Naive thymus-derived CD8-positive, alpha-beta T cell (primary cell): ENCODE measurements at regions of chr2 and their contacts with region 1.

Region 1: GRCh38 chr2:7450188-7450832 is 533.1 kb downstream of the RNF144A start:
- DNase-seq: peak in 8 of 10 donors; percentile 46 to 90 (median 76)
- ATAC-seq: peak; percentile 81 to 91
- H3K4me3 Mint-ChIP-seq: peak overlapping the region; percentile 46 to 84 (median 78)
- H3K27ac Mint-ChIP-seq: peak overlapping the region; percentile 96 to 99 (median 98)
- H3K4me1 Mint-ChIP-seq: peaks cover 51 to 86% (median 78%) of the 10 kb centered on the region in 4 donors
- H3K27me3 Mint-ChIP-seq: no peaks in the 10 kb centered on the region

Region 2: DNA sequence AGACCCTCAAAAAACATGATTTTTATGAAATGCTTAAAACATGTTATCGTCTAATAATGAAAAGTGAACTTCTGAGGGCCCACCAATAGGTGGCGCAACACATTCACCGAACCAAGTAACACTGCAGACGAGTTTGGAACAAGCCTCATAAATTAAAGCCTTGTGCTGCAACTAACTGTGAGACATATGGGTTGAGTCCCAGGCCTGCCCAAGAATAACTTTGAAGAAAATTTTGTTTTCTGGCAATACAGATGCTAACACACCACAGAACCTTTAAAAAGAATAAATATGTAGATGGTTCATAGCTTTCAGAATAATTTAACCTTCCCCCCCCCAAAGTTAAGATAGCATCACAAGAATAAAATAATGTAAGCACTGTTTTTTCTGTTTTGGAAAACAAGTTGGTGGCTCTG is 247.2 kb before region 1 on chr2:
- POLR2A ChIA-PET with region 1: no interaction called
- DNase-seq: peak; percentile 33 to 81 (median 62)
- ATAC-seq: peak; percentile 58 to 74
- H3K4me3 Mint-ChIP-seq: no peak overlapping the region
- H3K27ac Mint-ChIP-seq: no peak overlapping the region
- H3K4me1 Mint-ChIP-seq: no peaks in the 10 kb centered on the region
- H3K27me3 Mint-ChIP-seq: no peaks in the 10 kb centered on the region

Region 3: DNA sequence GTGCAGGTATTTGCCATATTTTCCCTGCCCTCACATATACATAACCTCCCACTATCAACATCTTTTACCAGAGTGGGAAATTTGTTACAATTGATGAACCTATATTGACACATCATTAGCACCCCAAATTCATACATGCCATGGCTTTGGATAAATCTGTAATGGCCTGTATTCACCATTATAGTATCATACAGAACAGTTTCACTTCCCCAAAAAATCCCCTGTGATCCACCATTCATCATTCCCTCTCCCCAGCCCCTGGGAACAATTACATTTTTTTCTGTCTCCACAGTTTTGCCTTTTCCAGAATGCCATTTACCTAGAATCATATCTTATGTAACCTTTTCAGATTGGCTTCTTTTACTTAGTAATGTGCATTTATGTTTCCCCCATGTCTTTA is 38.6 kb before region 1 on chr2:
- POLR2A ChIA-PET with region 1: no interaction called
- DNase-seq: no peak
- ATAC-seq: no peak
- H3K4me3 Mint-ChIP-seq: no peak overlapping the region
- H3K27ac Mint-ChIP-seq: no peak overlapping the region
- H3K4me1 Mint-ChIP-seq: no peaks in the 10 kb centered on the region
- H3K27me3 Mint-ChIP-seq: peaks cover 0 to 8% (median 5%) of the 10 kb centered on the region in 5 donors

Region 4: DNA sequence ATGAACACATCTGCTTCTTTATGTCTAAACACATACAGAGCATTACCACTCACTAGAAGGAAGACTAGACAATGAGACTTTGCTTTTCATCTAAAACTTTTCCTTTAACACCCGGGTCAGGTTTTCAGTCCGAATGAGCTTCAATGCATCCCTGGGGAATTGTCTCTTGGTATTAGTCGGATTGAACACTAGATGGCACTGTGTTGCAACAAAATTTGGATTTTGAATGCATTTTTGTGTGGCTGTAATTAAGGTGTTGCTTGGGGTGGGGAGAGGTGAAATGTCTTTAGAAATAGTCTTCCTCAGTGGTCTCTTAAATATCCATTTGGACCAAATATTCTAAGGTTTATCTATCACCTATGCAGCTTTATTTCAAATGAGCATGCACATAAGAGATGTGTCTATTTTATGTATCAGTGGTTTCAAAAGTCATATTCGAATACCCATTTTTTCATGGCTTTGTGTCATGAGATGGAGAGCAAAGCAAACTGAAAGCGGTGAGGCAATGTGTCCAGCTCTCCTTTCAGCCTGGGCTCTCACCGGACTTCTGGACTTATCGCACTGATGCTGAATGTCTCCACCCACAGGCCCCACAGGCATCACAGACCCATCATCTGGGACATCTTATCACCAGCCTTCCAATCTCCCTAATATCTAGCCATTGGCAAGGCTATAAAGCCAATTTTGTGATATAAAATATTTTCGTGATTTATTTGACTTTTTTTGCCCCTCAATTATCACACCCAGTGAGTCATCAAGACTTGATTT is 22.8 kb before region 1 on chr2:
- POLR2A ChIA-PET with region 1: interaction called, 38 read pairs
- DNase-seq: peak in 6 of 10 donors; percentile 19 to 77 (median 62)
- ATAC-seq: peak; percentile 10 to 35
- H3K4me3 Mint-ChIP-seq: peak overlapping the region in 7 of 10 donors; percentile 2 to 48 (median 26)
- H3K27ac Mint-ChIP-seq: peak overlapping the region; percentile 47 to 99 (median 80)
- H3K4me1 Mint-ChIP-seq: peaks cover 34 to 46% (median 46%) of the 10 kb centered on the region in 4 donors
- H3K27me3 Mint-ChIP-seq: peaks cover 0 to 3% (median 0%) of the 10 kb centered on the region in 5 donors

Region 5: GRCh38 chr2:7467782-7468447 is 17.6 kb after region 1 on chr2:
- POLR2A ChIA-PET with region 1: interaction called, 12 read pairs
- DNase-seq: peak in 8 of 10 donors; percentile 35 to 85 (median 74)
- ATAC-seq: peak; percentile 94 to 98
- H3K4me3 Mint-ChIP-seq: peak overlapping the region in 9 of 10 donors; percentile 11 to 63 (median 47)
- H3K27ac Mint-ChIP-seq: peak overlapping the region; percentile 70 to 96 (median 92)
- H3K4me1 Mint-ChIP-seq: peaks cover 17 to 47% (median 44%) of the 10 kb centered on the region in 4 donors
- H3K27me3 Mint-ChIP-seq: no peaks in the 10 kb centered on the region

Region 6: GRCh38 chr2:7517088-7517487 is 66.8 kb after region 1 on chr2:
- POLR2A ChIA-PET with region 1: interaction called, 10 read pairs
- DNase-seq: peak in 9 of 10 donors; percentile 25 to 79 (median 64)
- ATAC-seq: peak; percentile 90 to 98
- H3K4me3 Mint-ChIP-seq: peak overlapping the region; percentile 70 to 88 (median 80)
- H3K27ac Mint-ChIP-seq: peak overlapping the region; percentile 95 to 99 (median 96)
- H3K4me1 Mint-ChIP-seq: peaks cover 33 to 70% (median 61%) of the 10 kb centered on the region in 4 donors
- H3K27me3 Mint-ChIP-seq: no peaks in the 10 kb centered on the region